ENCODE measurements at regions of chr11 and their contacts with region 1.

Region 1: GRCh38 chr11:117010808-117011540 is 87.3 kb downstream of the SIK3 start:
- DNase-seq: no peak
- H3K4me3 ChIP-seq: no peak overlapping the region
- H3K27ac ChIP-seq: no peak overlapping the region
- H3K4me1 ChIP-seq: peaks cover 0 to 27% (median 6%) of the 10 kb centered on the region in 4 donors
- H3K27me3 ChIP-seq: no peaks in the 10 kb centered on the region
- CTCF ChIP-seq: no peak
- EP300 ChIP-seq: no peak
- POLR2A ChIP-seq: no peak

Region 2: GRCh38 chr11:116644941-116645305 is 366.1 kb before region 1 on chr11:
- intact Hi-C with region 1: no loop called
- DNase-seq: no peak
- H3K4me3 ChIP-seq: no peak overlapping the region
- H3K27ac ChIP-seq: no peak overlapping the region
- H3K4me1 ChIP-seq: no peaks in the 10 kb centered on the region
- H3K27me3 ChIP-seq: peaks cover 0 to 47% (median 4%) of the 10 kb centered on the region in 3 donors
- CTCF ChIP-seq: no peak
- EP300 ChIP-seq: no peak
- POLR2A ChIP-seq: no peak

Region 3: GRCh38 chr11:117072517-117073461 is 61.8 kb after region 1 on chr11:
- intact Hi-C with region 1: loop called (anchors 10 kb)
- DNase-seq: peak in 1 of 2 donors; percentile 52
- H3K4me3 ChIP-seq: no peak overlapping the region
- H3K27ac ChIP-seq: peak overlapping the region in 4 of 5 donors; percentile 13 to 43 (median 26)
- H3K4me1 ChIP-seq: peaks cover 42 to 92% (median 69%) of the 10 kb centered on the region in 4 donors
- H3K27me3 ChIP-seq: no peaks in the 10 kb centered on the region
- CTCF ChIP-seq: no peak
- EP300 ChIP-seq: no peak
- POLR2A ChIP-seq: no peak